ENCODE measurements at regions of chr16 and their contacts with region 1.

Region 1: DNA sequence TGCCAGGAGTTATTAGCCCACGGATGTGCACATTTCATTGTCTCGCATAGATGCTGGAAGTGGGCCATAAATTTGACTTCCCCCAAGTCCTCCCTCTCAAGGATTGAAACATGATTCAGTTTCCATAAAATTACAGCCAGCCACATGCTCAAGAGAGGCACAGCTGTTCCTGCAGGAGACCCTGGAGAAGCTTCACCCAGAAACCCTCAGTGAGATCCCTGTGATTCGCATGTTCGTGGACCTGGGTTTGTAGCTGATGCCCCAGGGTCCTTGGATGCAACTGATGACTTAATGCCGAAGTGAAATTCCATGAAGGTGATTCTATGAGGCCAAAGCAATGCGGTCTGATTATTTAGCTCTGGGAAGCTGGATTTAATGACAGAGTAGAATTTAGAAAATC is 24.7 kb upstream of the AQP8 start:
- DNase-seq: no peak
- H3K4me3 Mint-ChIP-seq: no peak overlapping the region
- H3K27ac Mint-ChIP-seq: no peak overlapping the region
- H3K4me1 Mint-ChIP-seq: no peaks in the 10 kb centered on the region
- H3K27me3 Mint-ChIP-seq: no peaks in the 10 kb centered on the region

Region 2: DNA sequence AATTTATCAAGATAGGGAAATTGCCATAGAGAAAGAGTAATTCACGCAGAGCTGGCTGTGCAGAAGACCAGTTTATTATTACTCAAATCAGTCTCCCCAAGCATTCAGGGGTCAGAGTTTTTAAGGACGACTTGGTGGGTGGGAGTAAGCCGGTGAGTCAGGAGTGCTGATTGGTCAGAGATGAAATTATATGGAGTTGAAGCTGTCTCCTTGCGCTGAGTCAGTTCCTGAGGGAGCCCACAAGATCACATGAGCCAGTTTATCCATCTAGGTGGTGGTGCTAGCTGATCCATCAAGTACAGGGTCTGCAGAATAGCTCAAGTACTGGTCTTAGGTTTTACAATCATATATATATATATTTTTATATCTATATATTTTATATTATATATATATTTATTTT is 18.7 kb after region 1 on chr16:
- CTCF ChIA-PET with region 1: interaction called, 10 read pairs
- POLR2A ChIA-PET with region 1: no interaction called
- intact Hi-C with region 1: no loop called
- DNase-seq: peak; percentile 23
- H3K4me3 Mint-ChIP-seq: no peak overlapping the region
- H3K27ac Mint-ChIP-seq: no peak overlapping the region
- H3K4me1 Mint-ChIP-seq: peaks cover 3% of the 10 kb centered on the region
- H3K27me3 Mint-ChIP-seq: no peaks in the 10 kb centered on the region

Region 3: GRCh38 chr16:25349337-25349736 is 157.2 kb after region 1 on chr16:
- CTCF ChIA-PET with region 1: no interaction called
- POLR2A ChIA-PET with region 1: no interaction called
- intact Hi-C with region 1: no loop called
- DNase-seq: no peak
- H3K4me3 Mint-ChIP-seq: no peak overlapping the region
- H3K27ac Mint-ChIP-seq: no peak overlapping the region
- H3K4me1 Mint-ChIP-seq: no peaks in the 10 kb centered on the region
- H3K27me3 Mint-ChIP-seq: peaks cover 8% of the 10 kb centered on the region

Measured in activated CD4-positive, alpha-beta memory T cell treated with anti-CD3 and anti-CD28 coated beads for 36 hours (primary cell).